Left colon (tissue), 2 donors: ENCODE measurements at regions of chr4 and their contacts with region 1.

Region 1: GRCh38 chr4:158722917-158723793 is at the start of gene PPID:
- DNase-seq: peak; percentile 87 to 91
- ATAC-seq: peak; percentile 97
- total RNA-seq, gene PPID: 16.4 to 19.7 TPM

Region 2: GRCh38 chr4:158805619-158806471 is 82.7 kb after region 1 on chr4:
- intact Hi-C with region 1: no loop called
- DNase-seq: no peak
- ATAC-seq: peak; percentile 47

Region 3: GRCh38 chr4:159175085-159175988 is 452.2 kb after region 1 on chr4:
- intact Hi-C with region 1: loop called in 1 of 2 experiments (anchors 10 kb)
- DNase-seq: peak; percentile 49
- ATAC-seq: peak; percentile 89